Panc1 (cell line): ENCODE measurements at regions of chr5 and their contacts with region 1.

Region 1: DNA sequence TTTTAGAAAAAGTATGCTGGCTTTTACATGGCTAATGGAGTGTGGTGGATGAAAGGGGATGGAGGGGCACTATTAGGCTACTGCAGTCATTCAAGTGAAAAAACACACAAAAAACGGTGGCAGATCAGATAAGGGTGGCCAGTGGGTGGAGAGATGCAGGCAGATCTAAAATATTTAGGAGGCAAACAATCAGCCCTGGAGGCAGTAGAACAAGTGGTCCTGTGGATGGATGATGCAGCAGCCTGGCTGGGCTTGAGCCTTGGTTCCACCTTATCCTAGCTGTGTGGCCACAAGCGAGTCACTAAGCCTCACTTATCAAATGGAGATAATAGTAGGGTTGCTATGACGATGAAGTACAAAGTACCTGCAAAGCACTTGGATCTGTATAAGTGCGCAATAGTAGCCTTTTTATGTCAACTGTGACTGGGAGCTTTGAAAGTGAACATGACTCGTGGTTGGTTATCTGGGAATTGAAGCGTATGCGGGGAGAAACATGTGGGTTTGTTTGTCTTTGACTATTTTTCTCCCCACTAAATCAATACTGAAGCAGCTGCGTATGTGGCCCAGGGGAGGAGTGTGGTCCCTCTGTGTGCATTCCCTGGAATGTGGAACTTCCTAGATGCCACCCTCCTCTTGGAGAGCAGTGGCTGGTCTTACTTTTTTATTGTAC is 20.2 kb downstream of the NSG2 start:
- DNase-seq: no peak
- ATAC-seq: no peak
- H3K4me3 ChIP-seq: no peak overlapping the region
- H3K27ac ChIP-seq: no peak overlapping the region
- H3K4me1 ChIP-seq: no peaks in the 10 kb centered on the region
- H3K27me3 ChIP-seq: peaks cover 7% of the 10 kb centered on the region; the same call in 1 of the 2 replicates
- CTCF ChIP-seq: no peak

Region 2: DNA sequence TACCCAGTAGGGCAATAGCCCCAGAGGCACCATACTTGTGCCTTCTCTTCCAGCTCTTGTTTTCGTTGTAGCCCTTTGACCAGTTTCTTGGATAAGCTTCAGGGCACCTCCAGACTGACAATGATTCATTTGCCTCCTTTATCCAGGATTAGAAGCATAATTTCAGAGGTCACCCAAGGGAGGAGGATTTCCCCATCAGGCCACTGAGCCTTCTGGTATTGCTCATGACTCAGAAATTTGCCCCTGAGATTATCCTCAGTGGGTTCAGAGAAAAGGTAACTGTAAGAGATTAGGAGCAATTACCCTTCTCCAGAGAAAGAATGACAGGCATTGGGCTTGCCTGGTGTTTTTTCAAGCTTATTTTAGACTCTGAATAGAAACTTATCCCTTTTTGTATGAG is 806.6 kb after region 1 on chr5:
- CTCF ChIA-PET with region 1: no interaction called
- POLR2A ChIA-PET with region 1: interaction called, 19 read pairs
- in situ Hi-C with region 1: no loop called
- intact Hi-C with region 1: no loop called
- DNase-seq: no peak
- ATAC-seq: no peak
- H3K4me3 ChIP-seq: no peak overlapping the region
- H3K27ac ChIP-seq: no peak overlapping the region
- H3K4me1 ChIP-seq: no peaks in the 10 kb centered on the region
- H3K27me3 ChIP-seq: peaks cover 29% of the 10 kb centered on the region
- CTCF ChIP-seq: no peak